Activated naive CD8-positive, alpha-beta T cell treated with anti-CD3 and anti-CD28 coated beads, Interleukin-2, amount 10 ng/mL, durations not matched to agents 7 days and 5 days (primary cell): ENCODE measurements at regions of chr14 and their contacts with region 1.

Region 1: DNA sequence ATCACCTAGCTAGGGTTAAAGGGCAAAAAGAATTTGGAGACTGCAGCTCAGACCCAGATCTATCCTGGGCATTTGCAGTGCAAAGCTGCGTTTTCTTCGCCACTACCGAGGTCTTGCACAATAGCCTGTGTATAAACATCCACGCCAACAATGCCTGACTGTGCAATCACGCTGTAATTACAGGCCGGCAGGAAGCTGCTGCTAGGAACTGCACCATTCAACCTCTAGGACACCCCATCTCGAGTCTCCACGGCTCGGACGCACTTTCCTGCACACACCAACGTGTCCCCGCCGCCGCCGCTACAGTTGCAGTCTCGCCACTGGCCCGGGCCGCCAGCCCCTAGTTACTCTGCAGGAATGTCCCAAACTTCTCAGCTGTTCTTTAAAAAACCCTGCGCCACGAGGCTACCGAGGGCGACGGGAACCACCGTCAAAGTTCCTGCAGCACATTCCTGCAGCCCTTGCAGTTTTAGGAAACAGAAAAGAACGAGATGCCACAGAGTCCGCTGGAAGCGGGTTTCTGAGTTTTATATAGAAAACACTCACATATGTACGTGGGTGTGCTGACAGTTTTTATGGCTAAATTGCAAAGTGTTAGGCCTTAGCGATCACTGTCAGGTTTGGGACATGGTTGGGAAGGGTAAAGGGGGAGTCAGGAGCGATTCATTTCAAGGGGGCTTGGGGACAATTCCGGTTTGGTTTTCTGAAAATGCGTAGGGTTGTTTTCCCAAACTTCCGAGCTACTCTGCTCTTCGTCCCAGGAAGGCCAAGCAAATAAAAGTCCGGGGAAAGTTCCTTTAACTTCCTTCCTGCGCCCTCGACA is 65.5 kb upstream of the PTGR2 start:
- DNase-seq: peak; percentile 76
- ATAC-seq: peak; percentile 68
- H3K4me3 Mint-ChIP-seq: peak overlapping the region; percentile 94
- H3K27ac Mint-ChIP-seq: peak overlapping the region; percentile 93
- H3K4me1 Mint-ChIP-seq: peaks cover 59% of the 10 kb centered on the region
- H3K27me3 Mint-ChIP-seq: no peaks in the 10 kb centered on the region

Region 2: DNA sequence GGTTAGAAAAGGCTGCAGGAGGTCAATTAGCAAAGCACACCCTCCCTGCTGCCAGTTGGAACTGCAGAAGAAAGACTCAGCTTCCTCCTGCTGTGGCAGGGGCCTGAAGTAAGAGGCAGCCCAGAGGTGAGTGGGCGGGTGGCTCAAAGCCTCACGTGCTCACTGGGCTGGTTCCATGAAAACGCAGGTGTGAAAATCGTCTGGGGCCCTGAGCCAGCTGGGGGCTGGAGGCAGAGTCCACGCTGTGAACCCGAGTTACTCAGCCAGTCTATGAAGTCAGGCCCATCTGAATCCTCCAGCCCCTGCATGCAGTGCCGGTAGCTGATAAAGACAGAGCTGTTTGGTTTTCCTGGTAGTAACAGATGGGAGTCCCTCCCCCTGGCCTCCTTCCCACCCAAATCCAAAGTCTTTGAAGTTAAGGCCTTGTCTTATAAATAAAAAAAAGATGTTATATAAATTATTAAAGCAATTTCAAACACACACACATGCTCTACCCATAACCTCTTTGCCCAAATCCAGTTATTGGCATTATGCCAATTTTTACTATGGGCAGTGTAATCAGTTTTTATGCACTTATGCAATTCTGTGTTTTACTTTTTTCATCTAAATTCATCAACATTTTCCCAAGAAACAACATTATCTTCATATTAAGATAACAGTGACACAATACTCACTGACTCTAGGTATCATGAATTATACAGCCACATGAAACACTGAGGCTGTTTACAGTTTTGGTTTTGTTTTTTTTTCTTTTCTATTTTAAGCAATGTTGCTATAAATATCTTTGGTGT is 14.0 kb before region 1 on chr14:
- POLR2A ChIA-PET with region 1: interaction called, 104 read pairs
- DNase-seq: peak; percentile 65
- ATAC-seq: peak; percentile 85
- H3K4me3 Mint-ChIP-seq: peak overlapping the region; percentile 62
- H3K27ac Mint-ChIP-seq: peak overlapping the region; percentile 84
- H3K4me1 Mint-ChIP-seq: peaks cover 50% of the 10 kb centered on the region
- H3K27me3 Mint-ChIP-seq: no peaks in the 10 kb centered on the region

Region 3: GRCh38 chr14:73851644-73852382 is 65.7 kb after region 1 on chr14 and contains the start of gene PTGR2:
- POLR2A ChIA-PET with region 1: interaction called, 15 read pairs
- DNase-seq: peak; percentile 87
- ATAC-seq: peak; percentile 98
- H3K4me3 Mint-ChIP-seq: peak within 1 kb of the TSS; percentile 91
- H3K27ac Mint-ChIP-seq: peak within 1 kb of the TSS; percentile 94
- H3K4me1 Mint-ChIP-seq: peaks cover 13% of the 10 kb centered on the region
- H3K27me3 Mint-ChIP-seq: peaks cover 2% of the 10 kb centered on the region
- total RNA-seq, gene PTGR2: 3.4 to 3.6 TPM